Esophagus muscularis mucosa (tissue), 4 donors: ENCODE measurements at regions of chr9 and their contacts with region 1.

Region 1: DNA sequence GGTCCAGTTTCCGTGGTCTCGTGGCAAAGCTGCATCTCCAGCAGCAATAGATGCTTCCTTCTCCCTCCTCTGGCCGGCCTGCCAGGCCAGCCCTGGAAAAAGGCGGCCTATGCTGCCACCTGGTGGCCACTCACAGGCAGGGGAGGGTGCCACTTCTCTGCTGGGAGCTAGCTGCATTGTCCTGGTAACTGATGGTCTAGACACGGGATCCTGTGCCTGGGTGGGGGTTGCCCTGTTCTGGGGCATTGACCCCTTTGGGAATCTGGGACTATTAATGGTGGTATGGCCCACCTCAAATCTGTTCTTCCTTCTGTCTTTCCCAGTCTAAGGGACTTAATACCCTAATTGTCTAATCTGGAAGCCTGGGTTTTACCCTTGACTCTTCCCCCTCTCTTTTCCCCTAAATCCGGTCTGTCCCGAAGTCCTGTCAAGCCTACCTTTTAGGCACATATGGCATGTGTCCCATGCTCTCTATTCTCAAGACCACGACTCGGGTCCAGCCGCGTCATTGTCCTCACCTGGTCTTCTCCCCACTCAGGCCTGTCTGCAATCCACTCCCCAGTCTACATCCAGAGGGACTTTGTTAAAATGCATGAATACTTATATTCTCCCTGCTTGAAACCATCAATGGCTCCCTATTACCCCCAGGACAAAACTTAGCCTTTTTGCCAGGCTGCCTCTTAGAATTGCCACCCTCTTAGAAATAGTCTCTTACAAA is 20.0 kb upstream of the PTGS1 start:
- DNase-seq: peak; percentile 95
- H3K4me3 ChIP-seq: no peak overlapping the region
- H3K27ac ChIP-seq: no peak overlapping the region
- H3K4me1 ChIP-seq: peaks cover 13 to 27% (median 24%) of the 10 kb centered on the region in 4 donors
- H3K27me3 ChIP-seq: no peaks in the 10 kb centered on the region
- CTCF ChIP-seq: peak in 2 of 3 experiments; percentile 97
- EP300 ChIP-seq: no peak
- POLR2A ChIP-seq: no peak

Region 2: GRCh38 chr9:122125158-122125508 is 225.7 kb before region 1 on chr9:
- intact Hi-C with region 1: loop called (anchors 1 kb)
- DNase-seq: no peak
- H3K4me3 ChIP-seq: no peak overlapping the region
- H3K27ac ChIP-seq: no peak overlapping the region
- H3K4me1 ChIP-seq: peaks cover 32 to 36% (median 33%) of the 10 kb centered on the region in 4 donors
- H3K27me3 ChIP-seq: peaks cover 0 to 23% (median 2%) of the 10 kb centered on the region in 4 donors
- CTCF ChIP-seq: peak; percentile 95 to 98 (median 96)
- EP300 ChIP-seq: no peak
- POLR2A ChIP-seq: no peak

Region 3: DNA sequence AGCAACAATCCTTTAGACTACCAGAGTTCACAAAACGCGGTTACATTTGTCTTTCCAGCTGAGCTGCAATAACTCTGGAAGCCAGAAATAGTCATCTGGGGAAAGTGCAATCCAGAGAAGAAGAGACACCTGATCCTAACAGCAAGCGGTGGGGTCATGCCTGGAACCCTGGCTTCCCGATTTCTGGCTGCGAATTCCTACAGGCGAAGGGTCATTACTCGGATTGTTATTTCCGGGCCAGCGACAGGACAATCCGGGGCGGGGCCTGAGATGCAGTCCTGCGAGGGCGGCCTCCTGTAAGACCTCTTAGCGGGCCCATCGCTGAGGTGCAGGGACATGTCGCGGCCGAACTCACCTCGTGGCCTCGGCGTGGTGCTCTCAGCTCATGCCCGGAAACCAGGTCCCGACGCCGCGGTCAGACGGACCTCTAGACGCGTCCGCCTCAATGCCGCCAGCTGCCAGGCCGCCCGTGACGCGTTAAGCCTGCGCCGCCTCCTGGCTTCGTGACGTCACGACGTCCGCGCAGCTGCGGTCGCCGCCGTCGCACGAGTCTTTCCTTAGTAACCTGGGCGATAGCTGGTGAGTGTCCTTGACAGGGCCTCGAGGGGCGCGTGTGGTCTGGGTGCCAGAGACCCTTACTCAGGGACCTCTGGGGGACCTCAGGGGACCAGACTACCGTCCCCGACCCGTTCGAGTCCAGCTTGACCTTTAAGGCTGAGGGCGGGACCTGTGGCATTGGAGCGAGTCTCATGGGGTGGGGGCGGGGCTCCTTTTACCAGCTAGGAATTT is 86.2 kb before region 1 on chr9 and contains the starts of genes MRRF and RBM18:
- intact Hi-C with region 1: loop called (anchors 5 kb)
- DNase-seq: peak; percentile 98
- H3K4me3 ChIP-seq: peak within 1 kb of the TSS; percentile 68 to 87 (median 72)
- H3K27ac ChIP-seq: peak within 1 kb of the TSS; percentile 89 to 92 (median 90)
- H3K4me1 ChIP-seq: peaks cover 46 to 61% (median 51%) of the 10 kb centered on the region in 4 donors
- H3K27me3 ChIP-seq: no peaks in the 10 kb centered on the region
- CTCF ChIP-seq: no peak
- EP300 ChIP-seq: no peak
- POLR2A ChIP-seq: peak; percentile 63
- total RNA-seq, gene MRRF: 20.5 to 29.2 (median 28.5) TPM
- total RNA-seq, gene RBM18: 10.1 to 14.6 (median 13.3) TPM

Region 4: GRCh38 chr9:122406070-122406890 is 55.5 kb after region 1 on chr9:
- intact Hi-C with region 1: no loop called
- DNase-seq: no peak
- H3K4me3 ChIP-seq: peak overlapping the region; percentile 9 to 58 (median 24)
- H3K27ac ChIP-seq: peak overlapping the region in 1 of 4 donors; percentile 54
- H3K4me1 ChIP-seq: peaks cover 0 to 6% (median 5%) of the 10 kb centered on the region in 4 donors
- H3K27me3 ChIP-seq: no peaks in the 10 kb centered on the region
- CTCF ChIP-seq: no peak
- EP300 ChIP-seq: no peak
- POLR2A ChIP-seq: no peak

Region 5: GRCh38 chr9:122453677-122454135 is 102.9 kb after region 1 on chr9:
- intact Hi-C with region 1: loop called (anchors 5 kb)
- DNase-seq: no peak
- H3K4me3 ChIP-seq: no peak overlapping the region
- H3K27ac ChIP-seq: no peak overlapping the region
- H3K4me1 ChIP-seq: no peaks in the 10 kb centered on the region
- H3K27me3 ChIP-seq: no peaks in the 10 kb centered on the region
- CTCF ChIP-seq: no peak
- EP300 ChIP-seq: no peak
- POLR2A ChIP-seq: no peak